ENCODE measurements at regions of chr12 and their contacts with region 1.

Region 1: DNA sequence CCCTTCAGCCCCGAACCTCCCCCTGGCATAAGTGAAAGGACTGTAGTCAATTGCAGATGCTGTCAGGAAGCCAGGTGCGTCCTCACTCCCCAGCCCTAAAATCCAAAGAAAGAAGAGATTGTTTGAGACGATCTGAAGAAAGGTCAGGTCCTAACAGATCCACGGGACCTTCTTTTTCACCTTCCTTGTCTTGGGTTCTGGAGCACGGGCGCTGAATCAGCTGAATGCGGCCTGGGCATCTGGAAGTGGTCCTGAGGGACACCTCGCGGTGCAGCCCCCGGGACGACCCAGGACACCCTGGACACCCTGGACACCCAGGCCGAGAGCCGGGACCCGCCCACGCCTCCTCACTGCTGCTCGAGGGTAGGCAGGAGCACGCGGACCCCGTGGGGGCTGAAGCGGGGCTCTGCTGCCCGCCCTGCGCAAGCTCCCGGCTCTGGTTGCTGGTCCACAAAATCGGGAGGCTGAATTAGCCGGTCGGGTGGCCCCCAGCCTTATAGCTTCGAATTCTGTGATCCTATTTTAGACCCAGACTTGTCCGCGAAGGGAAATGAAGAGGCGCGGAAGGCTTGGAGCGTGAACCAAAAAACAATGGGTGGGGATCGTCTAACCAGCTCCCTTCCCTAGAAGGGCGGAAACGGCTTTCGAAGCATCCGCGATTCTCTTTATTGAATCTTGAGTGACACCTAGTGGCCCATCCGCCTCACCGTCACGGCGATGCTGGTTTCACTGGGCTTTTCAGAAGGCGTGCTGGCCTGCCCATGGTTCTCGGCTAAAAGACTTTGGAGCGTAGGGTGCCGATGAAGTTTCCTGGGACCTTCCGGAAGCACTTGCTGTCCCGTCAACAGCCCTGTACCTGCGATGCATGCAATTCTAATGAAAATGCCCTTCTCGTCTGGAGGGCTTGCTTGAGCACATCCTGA is 46.4 kb upstream of the PLXNC1 start:
- DNase-seq: peak; percentile 82
- ATAC-seq: peak; percentile 91
- H3K4me3 ChIP-seq: peak overlapping the region; percentile 53
- H3K27ac ChIP-seq: peak overlapping the region; percentile 27
- H3K4me1 ChIP-seq: peaks cover 10% of the 10 kb centered on the region
- H3K27me3 ChIP-seq: no peaks in the 10 kb centered on the region
- CTCF ChIP-seq: peak; percentile 90
- POLR2A ChIP-seq: no peak
- RAD21 ChIP-seq: peak; percentile 92

Region 2: GRCh38 chr12:92987362-92987761 is 1114.6 kb before region 1 on chr12:
- CTCF ChIA-PET with region 1: interaction called, 3 read pairs
- POLR2A ChIA-PET with region 1: no interaction called
- dilution Hi-C with region 1: no loop called
- in situ Hi-C with region 1: loop called (anchors 25 kb)
- intact Hi-C with region 1: loop called (anchors 10 kb)
- DNase-seq: peak; percentile 79
- ATAC-seq: peak; percentile 93
- H3K4me3 ChIP-seq: no peak overlapping the region
- H3K27ac ChIP-seq: no peak overlapping the region
- H3K4me1 ChIP-seq: peaks cover 2% of the 10 kb centered on the region; the same call in 1 of the 2 replicates
- H3K27me3 ChIP-seq: no peaks in the 10 kb centered on the region
- CTCF ChIP-seq: peak; percentile 74
- POLR2A ChIP-seq: no peak
- RAD21 ChIP-seq: peak; percentile 82

Region 3: DNA sequence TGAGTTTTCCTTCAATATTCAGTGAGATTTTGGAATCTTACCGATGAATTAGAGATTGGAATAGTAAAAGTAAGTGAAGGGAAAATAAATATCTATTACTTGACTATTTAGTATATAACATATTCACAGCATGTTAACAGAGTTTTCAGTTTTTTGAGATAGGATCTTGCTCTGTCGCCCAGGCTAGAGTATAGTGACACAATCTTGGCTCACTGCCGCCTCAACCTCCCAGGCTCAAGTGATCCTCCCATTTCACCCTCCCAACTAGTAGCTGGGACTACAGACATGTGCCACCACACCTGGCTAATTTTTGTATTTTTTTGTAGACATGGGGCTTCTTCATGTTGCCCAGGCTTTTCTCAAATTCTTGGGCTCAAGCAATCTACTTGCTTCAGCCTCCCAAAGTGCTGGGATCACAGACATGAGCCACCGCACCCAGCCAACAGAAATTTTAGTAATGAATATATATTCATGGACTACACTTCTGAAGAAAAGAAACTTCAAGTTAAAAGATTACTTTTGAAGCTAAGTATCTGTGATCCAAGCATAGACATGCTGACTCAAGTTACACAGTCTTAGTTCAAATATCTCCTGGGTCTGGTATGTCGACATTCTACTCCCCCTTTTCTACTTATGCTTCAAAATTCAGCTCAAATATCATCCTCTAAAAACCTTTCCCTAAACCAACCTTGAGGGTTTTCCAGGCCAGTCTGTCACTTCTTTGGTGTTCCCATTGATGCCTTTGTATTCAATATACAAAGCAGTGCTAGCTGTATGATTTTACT is 674.0 kb before region 1 on chr12:
- CTCF ChIA-PET with region 1: no interaction called
- POLR2A ChIA-PET with region 1: no interaction called
- dilution Hi-C with region 1: no loop called
- in situ Hi-C with region 1: no loop called
- intact Hi-C with region 1: loop called (anchors 5 kb)
- DNase-seq: peak; percentile 80
- ATAC-seq: peak; percentile 85
- H3K4me3 ChIP-seq: no peak overlapping the region
- H3K27ac ChIP-seq: peak overlapping the region; percentile 82
- H3K4me1 ChIP-seq: peaks cover 26% of the 10 kb centered on the region
- H3K27me3 ChIP-seq: no peaks in the 10 kb centered on the region
- CTCF ChIP-seq: no peak
- POLR2A ChIP-seq: no peak
- RAD21 ChIP-seq: no peak

Region 4: DNA sequence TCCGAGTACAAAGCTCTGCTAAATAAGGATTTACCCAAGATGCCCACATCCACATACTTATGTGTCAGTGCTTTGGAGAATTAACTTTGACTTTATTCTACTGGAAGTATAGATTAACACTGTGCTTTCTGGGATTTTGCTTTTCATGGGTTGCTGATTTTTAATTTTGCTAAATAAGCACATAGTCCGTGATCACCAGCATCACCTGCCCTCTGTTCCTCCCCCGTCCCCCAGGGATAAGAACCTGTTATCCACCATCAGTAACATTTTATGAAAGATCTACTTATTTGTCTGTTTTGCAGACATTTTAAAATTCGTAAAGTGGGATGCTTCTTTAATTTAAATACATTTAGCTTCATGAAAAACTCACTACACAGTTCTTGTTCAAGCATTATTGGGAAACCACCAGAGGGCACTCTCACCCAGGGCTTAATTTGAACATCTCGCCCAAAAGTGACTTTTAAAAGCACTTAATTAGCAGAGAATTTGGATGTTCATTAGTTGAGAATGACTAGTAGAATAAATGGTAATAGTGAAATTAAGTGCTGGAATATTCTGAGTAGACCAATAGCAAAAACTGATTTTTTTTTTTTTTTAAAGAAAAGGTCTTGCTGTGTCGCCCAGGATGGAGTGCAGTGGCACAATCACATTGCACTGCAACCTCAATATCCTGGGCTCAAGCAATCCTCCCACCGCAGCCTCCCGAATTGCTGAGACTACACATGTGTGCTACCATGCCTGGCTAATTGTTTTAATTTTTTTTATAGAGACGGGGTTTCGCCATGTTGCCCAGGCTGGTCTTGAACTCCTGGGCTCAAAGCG is 599.0 kb before region 1 on chr12:
- CTCF ChIA-PET with region 1: interaction called, 46 read pairs
- POLR2A ChIA-PET with region 1: no interaction called
- dilution Hi-C with region 1: no loop called
- in situ Hi-C with region 1: loop called (anchors 5 kb)
- intact Hi-C with region 1: loop called (anchors 2 kb)
- DNase-seq: peak; percentile 48
- ATAC-seq: no peak
- H3K4me3 ChIP-seq: no peak overlapping the region
- H3K27ac ChIP-seq: no peak overlapping the region
- H3K4me1 ChIP-seq: 0 out of 2 replicates have a peak, but pooled peaks cover 1% of the 10 kb centered on the region
- H3K27me3 ChIP-seq: no peaks in the 10 kb centered on the region
- CTCF ChIP-seq: peak; percentile 77
- POLR2A ChIP-seq: no peak
- RAD21 ChIP-seq: peak; percentile 85

Region 5: GRCh38 chr12:93591137-93591868 is 510.7 kb before region 1 on chr12:
- CTCF ChIA-PET with region 1: no interaction called
- POLR2A ChIA-PET with region 1: interaction called, 11 read pairs
- dilution Hi-C with region 1: no loop called
- in situ Hi-C with region 1: no loop called
- intact Hi-C with region 1: no loop called
- DNase-seq: peak; percentile 87
- ATAC-seq: peak; percentile 94
- H3K4me3 ChIP-seq: peak overlapping the region; percentile 52
- H3K27ac ChIP-seq: peak overlapping the region; percentile 78
- H3K4me1 ChIP-seq: no peaks in the 10 kb centered on the region; the same call in 1 of the 2 replicates
- H3K27me3 ChIP-seq: no peaks in the 10 kb centered on the region
- CTCF ChIP-seq: no peak
- POLR2A ChIP-seq: peak; percentile 85
- RAD21 ChIP-seq: 0 out of 2 replicates have a peak, but pooled peaks have one; percentile 1

Region 6: GRCh38 chr12:93766796-93767523 is 335.0 kb before region 1 on chr12:
- CTCF ChIA-PET with region 1: interaction called, 39 read pairs
- POLR2A ChIA-PET with region 1: no interaction called
- dilution Hi-C with region 1: no loop called
- in situ Hi-C with region 1: loop called (anchors 5 kb)
- intact Hi-C with region 1: loop called (anchors 1 kb)
- DNase-seq: peak; percentile 76
- ATAC-seq: peak; percentile 92
- H3K4me3 ChIP-seq: no peak overlapping the region
- H3K27ac ChIP-seq: no peak overlapping the region
- H3K4me1 ChIP-seq: peaks cover 2% of the 10 kb centered on the region; the same call in 1 of the 2 replicates
- H3K27me3 ChIP-seq: no peaks in the 10 kb centered on the region
- CTCF ChIP-seq: peak; percentile 79
- POLR2A ChIP-seq: no peak
- RAD21 ChIP-seq: peak; percentile 90

Region 7: GRCh38 chr12:94074980-94075928 is 26.7 kb before region 1 on chr12:
- CTCF ChIA-PET with region 1: interaction called, 28 read pairs
- POLR2A ChIA-PET with region 1: no interaction called
- dilution Hi-C with region 1: no loop called
- in situ Hi-C with region 1: no loop called
- intact Hi-C with region 1: no loop called
- DNase-seq: peak; percentile 89
- ATAC-seq: peak; percentile 97
- H3K4me3 ChIP-seq: no peak overlapping the region
- H3K27ac ChIP-seq: no peak overlapping the region
- H3K4me1 ChIP-seq: peaks cover 4% of the 10 kb centered on the region; the same call in 1 of the 2 replicates
- H3K27me3 ChIP-seq: no peaks in the 10 kb centered on the region
- CTCF ChIP-seq: peak; percentile 78
- POLR2A ChIP-seq: no peak
- RAD21 ChIP-seq: peak; percentile 67